IMR-90 (cell line): ENCODE measurements at regions of chr10 and their contacts with region 1.

Region 1: GRCh38 chr10:35993591-35994515 is 351.8 kb upstream of the FZD8 start:
- DNase-seq: no peak
- ATAC-seq: no peak
- H3K4me3 ChIP-seq: no peak overlapping the region
- H3K27ac ChIP-seq: no peak overlapping the region
- H3K4me1 ChIP-seq: no peaks in the 10 kb centered on the region
- H3K27me3 ChIP-seq: no peaks in the 10 kb centered on the region; the same call in 1 of the 2 replicates
- CTCF ChIP-seq: no peak
- POLR2A ChIP-seq: no peak
- RAD21 ChIP-seq: no peak

Region 2: DNA sequence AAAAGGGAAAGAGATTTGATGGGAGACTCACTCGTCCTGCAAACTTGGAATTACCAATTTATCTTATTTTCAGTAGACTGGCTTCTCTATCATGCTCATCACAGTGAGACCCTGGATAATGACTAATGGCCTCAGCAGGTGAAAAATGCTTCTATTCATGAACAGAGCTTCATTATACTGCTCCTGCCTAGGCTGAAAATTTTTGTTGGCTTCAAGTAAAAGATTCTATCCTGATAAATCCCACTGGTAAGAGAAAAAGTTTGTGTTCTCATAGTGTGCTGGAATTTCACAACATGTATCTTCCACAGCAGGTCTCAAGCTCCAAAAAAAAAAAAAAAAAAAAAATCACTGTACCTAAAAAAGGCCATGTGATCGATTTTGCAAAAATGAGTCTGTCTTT is 22.5 kb before region 1 on chr10:
- CTCF ChIA-PET with region 1: no interaction called
- POLR2A ChIA-PET with region 1: interaction called, 16 read pairs
- dilution Hi-C with region 1: no loop called
- in situ Hi-C with region 1: no loop called
- intact Hi-C with region 1: no loop called
- DNase-seq: no peak
- ATAC-seq: no peak
- H3K4me3 ChIP-seq: no peak overlapping the region
- H3K27ac ChIP-seq: no peak overlapping the region
- H3K4me1 ChIP-seq: no peaks in the 10 kb centered on the region
- H3K27me3 ChIP-seq: peaks cover 12% of the 10 kb centered on the region
- CTCF ChIP-seq: no peak
- POLR2A ChIP-seq: no peak
- RAD21 ChIP-seq: no peak